MCF 10A (cell line): ENCODE measurements at regions of chr3 and their contacts with region 1.

Region 1: DNA sequence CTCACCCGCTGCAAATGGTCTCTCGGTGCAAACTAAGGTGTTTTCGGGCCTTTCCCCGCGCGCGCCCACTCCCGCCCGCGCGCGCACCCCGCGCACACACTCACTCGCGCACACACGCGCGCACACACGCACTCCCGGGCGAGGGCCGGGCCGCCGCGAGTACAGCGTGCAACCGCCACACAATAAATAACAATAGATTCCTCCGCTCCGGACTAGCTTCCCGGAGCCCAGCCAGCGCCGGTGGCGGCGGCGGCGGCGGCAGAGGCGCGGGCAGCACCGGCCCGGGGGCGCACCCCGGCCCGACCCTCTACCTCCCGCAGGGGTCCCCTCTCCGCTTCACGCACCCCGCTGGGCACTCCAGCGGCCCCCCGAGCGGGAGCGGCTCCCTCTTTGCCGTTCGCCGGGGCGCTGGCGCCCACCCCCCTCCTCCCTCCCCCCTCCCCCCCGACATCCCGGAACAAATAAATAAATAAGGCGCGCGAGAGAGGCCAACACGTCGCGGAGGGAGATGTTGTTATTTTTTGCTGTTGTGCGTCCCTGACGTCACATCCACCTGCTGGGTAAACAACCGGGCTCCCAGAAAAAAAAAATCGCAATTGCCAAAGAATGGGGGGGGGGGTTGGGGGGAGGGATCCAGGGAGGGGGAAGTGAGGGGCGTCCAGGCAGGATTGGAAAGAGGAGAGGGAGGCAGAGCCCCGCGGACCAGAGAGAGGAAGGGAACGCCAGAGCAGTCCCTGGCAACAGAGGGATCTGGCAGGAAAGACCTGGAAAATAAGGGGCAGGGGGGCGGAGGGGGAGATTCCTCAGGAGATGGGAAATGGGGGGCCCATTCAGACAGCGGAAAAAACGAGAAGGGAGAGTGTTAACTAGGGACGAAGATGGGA is at the start of gene FOXP1:
- DNase-seq: peak; percentile 64
- H3K4me3 Mint-ChIP-seq: peak within 1 kb of the TSS; percentile 85
- H3K27ac Mint-ChIP-seq: peak within 1 kb of the TSS; percentile 97
- H3K4me1 Mint-ChIP-seq: peaks cover 13% of the 10 kb centered on the region
- H3K27me3 Mint-ChIP-seq: no peaks in the 10 kb centered on the region
- CTCF ChIP-seq: no peak
- total RNA-seq, gene FOXP1: 49.0 and 51.1 TPM in 2 replicates

Region 2: DNA sequence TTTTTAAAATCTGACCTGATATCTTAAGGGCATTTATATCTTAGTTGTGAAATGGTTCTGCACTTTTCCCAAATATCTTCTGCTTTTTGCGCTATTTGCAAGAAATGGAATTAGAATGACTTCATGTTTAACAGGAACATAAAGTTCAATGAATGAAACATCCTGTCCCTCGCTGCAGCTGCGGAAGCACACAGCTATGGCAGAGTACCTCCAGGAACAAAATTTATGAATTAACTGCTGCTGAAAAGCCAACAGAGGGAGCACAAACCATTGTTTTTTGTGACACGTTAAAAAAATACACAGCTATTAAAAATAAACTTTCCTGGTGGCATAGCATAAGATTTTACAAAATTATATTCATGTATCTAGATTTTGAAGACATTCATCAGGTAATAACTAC is 867.0 kb before region 1 on chr3:
- CTCF ChIA-PET with region 1: interaction called, 3 read pairs
- POLR2A ChIA-PET with region 1: no interaction called
- intact Hi-C with region 1: loop called (anchors 1 kb)
- DNase-seq: peak; percentile 28
- H3K4me3 Mint-ChIP-seq: no peak overlapping the region
- H3K27ac Mint-ChIP-seq: no peak overlapping the region
- H3K4me1 Mint-ChIP-seq: no peaks in the 10 kb centered on the region
- H3K27me3 Mint-ChIP-seq: peaks cover 77% of the 10 kb centered on the region
- CTCF ChIP-seq: peak; percentile 34

Region 3: GRCh38 chr3:71064288-71064955 is 519.4 kb before region 1 on chr3:
- CTCF ChIA-PET with region 1: interaction called, 23 read pairs
- POLR2A ChIA-PET with region 1: interaction called, 219 read pairs
- intact Hi-C with region 1: loop called (anchors 2 kb)
- DNase-seq: peak; percentile 44
- H3K4me3 Mint-ChIP-seq: no peak overlapping the region
- H3K27ac Mint-ChIP-seq: no peak overlapping the region
- H3K4me1 Mint-ChIP-seq: peaks cover 37% of the 10 kb centered on the region
- H3K27me3 Mint-ChIP-seq: no peaks in the 10 kb centered on the region
- CTCF ChIP-seq: no peak

Region 4: DNA sequence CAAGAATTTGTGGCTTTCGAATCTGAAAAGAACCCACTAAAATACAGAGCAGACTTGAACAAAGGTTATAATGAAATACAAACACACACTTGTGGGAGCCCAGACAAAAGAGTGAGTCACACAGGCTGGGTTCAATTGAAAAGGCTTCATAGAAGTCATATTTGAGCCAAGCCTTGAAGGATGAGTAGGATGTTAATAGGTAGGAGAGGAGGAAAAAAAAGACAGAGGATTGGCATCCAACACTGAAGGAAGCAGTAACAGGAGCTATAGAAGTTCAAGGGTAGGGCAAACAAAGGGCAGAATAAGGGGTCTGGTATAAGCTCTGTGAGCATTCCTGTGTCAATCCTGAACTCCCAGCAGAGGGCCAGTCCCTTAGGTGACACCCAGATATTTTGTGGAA is 325.7 kb before region 1 on chr3:
- CTCF ChIA-PET with region 1: no interaction called
- POLR2A ChIA-PET with region 1: no interaction called
- intact Hi-C with region 1: loop called (anchors 5 kb)
- DNase-seq: peak; percentile 85
- H3K4me3 Mint-ChIP-seq: no peak overlapping the region
- H3K27ac Mint-ChIP-seq: peak overlapping the region; percentile 33
- H3K4me1 Mint-ChIP-seq: peaks cover 19% of the 10 kb centered on the region
- H3K27me3 Mint-ChIP-seq: no peaks in the 10 kb centered on the region
- CTCF ChIP-seq: no peak

Region 5: DNA sequence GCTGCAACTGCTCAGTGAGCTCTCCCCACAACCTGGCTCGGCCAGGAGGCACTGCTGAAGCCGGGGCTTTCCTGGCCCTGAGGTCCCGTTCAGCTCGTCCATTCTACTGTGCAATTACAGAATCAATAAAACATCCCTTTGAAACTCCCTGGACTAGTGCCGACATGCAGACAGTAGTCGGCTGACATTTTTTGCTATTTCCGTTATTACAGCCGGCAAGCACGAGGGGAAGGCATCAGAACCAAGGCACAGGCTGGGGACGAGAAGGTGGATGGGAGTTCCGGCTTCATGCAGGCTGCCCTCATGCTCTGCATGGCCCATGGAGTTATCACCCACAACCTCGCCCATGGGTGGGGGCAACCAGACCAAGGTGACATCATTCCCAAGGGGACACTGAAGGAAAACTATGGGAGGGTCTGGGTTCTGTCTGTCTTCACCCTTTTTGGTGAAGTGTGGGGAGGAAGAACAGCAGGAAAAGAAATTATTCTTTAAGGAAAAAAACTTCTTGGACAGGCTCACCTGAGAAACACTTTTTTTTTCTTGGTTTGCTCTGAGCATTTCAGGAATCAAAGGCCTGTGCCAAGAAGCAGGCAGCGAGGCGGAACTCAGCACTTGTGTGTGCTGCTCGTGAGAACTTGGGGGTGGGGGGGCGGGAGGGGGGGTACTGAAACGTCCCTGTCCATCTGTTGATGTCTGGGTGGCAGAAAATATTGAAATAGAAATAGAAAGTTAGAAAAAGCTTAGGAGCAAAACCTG is 154.8 kb before region 1 on chr3:
- CTCF ChIA-PET with region 1: interaction called, 3 read pairs
- POLR2A ChIA-PET with region 1: interaction called, 14 read pairs
- intact Hi-C with region 1: no loop called
- DNase-seq: peak; percentile 74
- H3K4me3 Mint-ChIP-seq: peak overlapping the region; percentile 58
- H3K27ac Mint-ChIP-seq: peak overlapping the region; percentile 87
- H3K4me1 Mint-ChIP-seq: peaks cover 59% of the 10 kb centered on the region
- H3K27me3 Mint-ChIP-seq: no peaks in the 10 kb centered on the region
- CTCF ChIP-seq: no peak

Region 6: GRCh38 chr3:71537211-71537611 is 46.6 kb before region 1 on chr3:
- CTCF ChIA-PET with region 1: interaction called, 3 read pairs
- POLR2A ChIA-PET with region 1: interaction called, 26 read pairs
- intact Hi-C with region 1: loop called (anchors 2 kb)
- DNase-seq: peak; percentile 98
- H3K4me3 Mint-ChIP-seq: peak overlapping the region; percentile 10
- H3K27ac Mint-ChIP-seq: peak overlapping the region; percentile 52
- H3K4me1 Mint-ChIP-seq: peaks cover 59% of the 10 kb centered on the region
- H3K27me3 Mint-ChIP-seq: no peaks in the 10 kb centered on the region
- CTCF ChIP-seq: no peak

Region 7: DNA sequence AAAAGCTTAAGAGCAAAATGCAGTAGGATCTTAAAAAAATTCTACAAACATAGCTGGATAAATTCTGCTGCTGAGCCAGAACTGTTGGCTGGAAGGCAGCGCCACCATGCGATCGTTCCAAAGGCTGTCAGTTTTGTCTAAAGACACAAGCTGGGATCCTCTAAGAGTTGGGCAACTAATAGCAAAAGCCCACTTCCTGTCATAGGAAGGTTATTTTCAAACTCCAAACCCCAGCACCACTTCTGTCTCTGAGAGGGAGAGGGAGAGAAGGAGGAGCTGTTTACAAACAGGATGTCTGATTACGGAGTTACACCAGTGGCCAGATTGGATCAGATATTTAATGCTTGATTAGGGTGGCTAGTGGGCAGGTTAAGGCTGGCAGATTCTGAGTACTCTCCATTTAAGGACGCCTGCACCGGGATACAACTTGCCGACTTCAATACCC is 97.4 kb after region 1 on chr3:
- CTCF ChIA-PET with region 1: interaction called, 16 read pairs
- POLR2A ChIA-PET with region 1: interaction called, 33 read pairs
- intact Hi-C with region 1: loop called (anchors 5 kb)
- DNase-seq: peak; percentile 80
- H3K4me3 Mint-ChIP-seq: peak overlapping the region; percentile 33
- H3K27ac Mint-ChIP-seq: peak overlapping the region; percentile 83
- H3K4me1 Mint-ChIP-seq: peaks cover 34% of the 10 kb centered on the region
- H3K27me3 Mint-ChIP-seq: no peaks in the 10 kb centered on the region
- CTCF ChIP-seq: peak; percentile 62

Region 8: DNA sequence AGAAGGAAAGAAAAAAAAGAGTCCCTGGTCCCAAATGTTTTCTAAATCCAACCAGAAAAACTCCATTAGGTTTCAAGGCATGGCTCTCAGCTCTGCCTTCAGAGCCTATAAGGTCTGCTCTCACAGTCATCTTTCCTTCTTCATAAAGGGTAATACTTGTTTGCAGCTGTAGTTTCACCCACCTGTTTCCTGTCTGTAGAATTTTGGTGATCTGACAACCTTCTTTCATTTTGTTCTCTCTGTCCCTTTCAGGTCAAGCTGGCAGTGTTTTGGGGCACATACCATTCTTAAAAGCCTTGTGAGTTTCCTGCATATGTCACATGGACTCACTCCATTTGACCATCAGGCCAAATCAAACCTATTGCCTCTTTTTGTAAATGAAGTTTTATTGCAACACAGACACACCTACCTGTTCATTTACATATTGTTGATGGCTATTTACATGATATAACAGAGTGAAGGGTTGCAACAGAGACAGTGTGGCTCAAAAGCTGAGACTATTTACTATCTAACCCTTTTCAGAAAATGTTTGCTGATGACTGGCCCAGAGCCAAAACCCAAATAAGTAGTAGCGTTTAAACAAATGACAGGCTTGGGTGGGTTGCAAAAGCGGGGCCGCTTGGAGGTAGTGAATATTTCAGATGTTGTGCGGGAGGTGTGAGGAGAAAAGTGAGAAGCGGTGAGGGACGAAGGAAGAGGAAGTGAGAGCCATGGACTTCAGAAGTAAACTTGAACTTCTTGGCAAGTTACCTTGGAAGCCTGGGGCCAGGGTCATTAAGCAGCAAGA is 493.9 kb after region 1 on chr3:
- CTCF ChIA-PET with region 1: no interaction called
- POLR2A ChIA-PET with region 1: no interaction called
- intact Hi-C with region 1: no loop called
- DNase-seq: no peak
- H3K4me3 Mint-ChIP-seq: no peak overlapping the region
- H3K27ac Mint-ChIP-seq: no peak overlapping the region
- H3K4me1 Mint-ChIP-seq: no peaks in the 10 kb centered on the region
- H3K27me3 Mint-ChIP-seq: peaks cover 15% of the 10 kb centered on the region
- CTCF ChIP-seq: no peak